K562 (cell line): ENCODE measurements at regions of chr12 and their contacts with region 1.

Region 1: GRCh38 chr12:66409195-66409871 is 107.0 kb downstream of the HELB start:
- DNase-seq: peak in 2 of 4 experiments; percentile 10 to 57
- ATAC-seq: peak; percentile 85
- H3K4me3 ChIP-seq: no peak overlapping the region
- H3K27ac ChIP-seq: no peak overlapping the region
- H3K4me1 ChIP-seq: no peaks in the 10 kb centered on the region
- H3K27me3 ChIP-seq: 0 out of 5 replicates have a peak, but pooled peaks cover 0 to 4% of the 10 kb centered on the region in 2 experiments
- CTCF ChIP-seq: peak; percentile 67 to 76 (median 76)
- EP300 ChIP-seq: no peak
- POLR2A ChIP-seq: no peak
- RAD21 ChIP-seq: peak; percentile 86 to 92

Region 2: DNA sequence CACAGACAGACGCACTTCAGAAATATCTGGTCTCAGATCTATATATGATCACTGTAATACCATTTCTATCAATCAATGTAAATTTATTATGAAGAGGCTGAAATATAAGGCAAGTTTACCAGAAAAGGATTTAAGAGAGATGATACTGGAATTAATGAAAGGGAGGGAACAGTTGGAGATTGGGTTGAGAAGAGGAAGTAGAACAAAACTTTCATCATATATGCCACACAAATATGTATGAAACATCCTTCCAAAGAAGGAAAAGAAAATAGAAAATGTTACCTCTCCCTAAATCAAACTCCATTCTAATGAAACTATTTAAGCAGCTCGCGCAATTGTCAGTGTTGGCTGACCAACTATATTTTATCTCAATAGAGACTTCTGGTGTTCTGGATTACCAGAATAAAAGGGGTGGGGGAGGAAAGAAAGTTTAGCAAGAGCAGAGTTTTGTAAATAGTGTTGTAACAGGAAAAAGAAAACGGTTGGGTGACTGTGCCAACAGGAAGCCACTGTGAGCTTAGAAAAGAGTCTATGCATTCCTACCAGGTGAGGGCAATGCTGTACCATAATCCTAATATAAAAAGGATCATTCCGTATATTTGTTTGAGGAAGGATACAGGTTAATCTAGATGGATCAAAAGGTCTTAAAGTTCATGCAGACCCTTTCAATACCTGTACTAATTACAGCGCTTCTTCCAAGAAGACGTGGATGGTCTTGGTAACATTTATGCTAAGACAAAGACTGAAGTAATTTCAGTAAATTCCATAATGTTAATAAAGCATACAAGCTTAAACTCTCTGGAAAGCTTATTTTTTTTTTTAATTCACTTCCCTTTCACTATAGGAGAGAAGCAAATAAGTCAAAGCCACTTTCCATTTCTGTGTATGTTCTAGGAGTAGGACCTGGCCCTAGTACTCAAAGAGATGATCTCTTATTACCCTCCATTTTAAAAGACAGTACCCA is 264.3 kb before region 1 on chr12:
- CTCF ChIA-PET with region 1: interaction called, 3 read pairs
- POLR2A ChIA-PET with region 1: no interaction called
- in situ Hi-C with region 1: no loop called
- intact Hi-C with region 1: loop called (anchors 2 kb)
- DNase-seq: peak in 2 of 4 experiments; percentile 15 to 31
- ATAC-seq: peak; percentile 60
- H3K4me3 ChIP-seq: no peak overlapping the region
- H3K27ac ChIP-seq: no peak overlapping the region
- H3K4me1 ChIP-seq: peaks cover 0 to 7% of the 10 kb centered on the region in 2 experiments; a peak in 2 of 5 replicates
- H3K27me3 ChIP-seq: no peaks in the 10 kb centered on the region
- CTCF ChIP-seq: peak in 2 of 3 experiments; percentile 44 to 62; a peak in 3 of 6 replicates
- EP300 ChIP-seq: no peak
- POLR2A ChIP-seq: no peak
- RAD21 ChIP-seq: peak in 1 of 2 experiments; percentile 65; a peak in 3 of 4 replicates

Region 3: GRCh38 chr12:66279123-66279712 is 130.1 kb before region 1 on chr12:
- CTCF ChIA-PET with region 1: interaction called, 3 read pairs
- POLR2A ChIA-PET with region 1: no interaction called
- in situ Hi-C with region 1: no loop called
- intact Hi-C with region 1: loop called (anchors 2 kb)
- DNase-seq: peak; percentile 13 to 25 (median 16)
- ATAC-seq: peak; percentile 73; the same call in 2 of the 3 replicates
- H3K4me3 ChIP-seq: no peak overlapping the region
- H3K27ac ChIP-seq: no peak overlapping the region
- H3K4me1 ChIP-seq: no peaks in the 10 kb centered on the region
- H3K27me3 ChIP-seq: no peaks in the 10 kb centered on the region
- CTCF ChIP-seq: peak; percentile 54 to 64 (median 54)
- EP300 ChIP-seq: no peak
- POLR2A ChIP-seq: no peak
- RAD21 ChIP-seq: peak; percentile 67 to 72

Region 4: GRCh38 chr12:66697404-66697803 is 288.1 kb after region 1 on chr12:
- CTCF ChIA-PET with region 1: no interaction called
- POLR2A ChIA-PET with region 1: no interaction called
- in situ Hi-C with region 1: no loop called
- intact Hi-C with region 1: no loop called
- DNase-seq: no peak
- ATAC-seq: no peak
- H3K4me3 ChIP-seq: no peak overlapping the region
- H3K27ac ChIP-seq: no peak overlapping the region
- H3K4me1 ChIP-seq: no peaks in the 10 kb centered on the region
- H3K27me3 ChIP-seq: no peaks in the 10 kb centered on the region
- CTCF ChIP-seq: no peak
- EP300 ChIP-seq: no peak
- POLR2A ChIP-seq: no peak
- RAD21 ChIP-seq: no peak